Naive thymus-derived CD4-positive, alpha-beta T cell (primary cell): ENCODE measurements at regions of chr10 and their contacts with region 1.

Region 1: GRCh38 chr10:74151056-74151878 is at the start of gene ADK:
- DNase-seq: peak in 8 of 9 donors; percentile 96 to 100 (median 99)
- ATAC-seq: peak; percentile 99
- H3K4me3 ChIP-seq: peak within 1 kb of the TSS; percentile 90
- H3K4me3 Mint-ChIP-seq: no peak within 1 kb of the TSS
- H3K27ac ChIP-seq: peak within 1 kb of the TSS; percentile 84
- H3K27ac Mint-ChIP-seq: peak within 1 kb of the TSS in 5 of 9 donors; percentile 8 to 78 (median 47)
- H3K4me1 ChIP-seq: peaks cover 17 to 23% of the 10 kb centered on the region in 2 donors
- H3K4me1 Mint-ChIP-seq: peaks cover 36 to 56% (median 47%) of the 10 kb centered on the region in 7 donors
- H3K27me3 ChIP-seq: no peaks in the 10 kb centered on the region
- H3K27me3 Mint-ChIP-seq: no peaks in the 10 kb centered on the region
- total RNA-seq, gene ADK: 20.7 to 32.6 (median 25.0) TPM

Region 2: DNA sequence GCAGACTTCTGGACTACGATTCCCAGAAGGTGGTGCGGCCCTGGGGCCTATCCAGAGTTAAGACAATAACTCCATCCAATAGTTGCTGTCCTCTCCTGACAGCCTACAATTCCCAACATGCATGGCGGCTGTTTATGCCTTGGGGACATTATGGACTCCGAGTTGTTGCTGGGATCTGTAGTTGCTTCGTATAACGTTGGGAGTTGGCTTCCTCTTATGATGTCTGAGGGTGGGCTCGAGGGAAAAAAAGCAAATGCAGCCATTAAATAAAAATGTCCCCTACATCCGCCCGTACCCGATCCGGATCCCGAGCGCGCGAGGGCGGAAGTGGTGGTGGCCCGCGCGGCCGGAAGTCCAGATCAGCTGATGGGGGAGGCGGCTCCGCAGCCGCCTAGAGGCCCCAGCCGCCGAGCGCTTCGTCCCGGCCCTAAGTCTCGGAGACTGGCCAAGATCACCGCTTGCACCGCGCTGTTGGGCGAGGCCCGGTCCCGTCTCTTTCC is 366.0 kb before region 1 on chr10 and contains the start of gene ZSWIM8:
- CTCF ChIA-PET with region 1: no interaction called
- POLR2A ChIA-PET with region 1: no interaction called
- intact Hi-C with region 1: loop called (anchors 1 kb)
- DNase-seq: peak; percentile 70 to 93 (median 86)
- ATAC-seq: peak; percentile 91
- H3K4me3 ChIP-seq: peak within 1 kb of the TSS; percentile 91
- H3K4me3 Mint-ChIP-seq: peak within 1 kb of the TSS; percentile 97 to 100 (median 98)
- H3K27ac ChIP-seq: peak within 1 kb of the TSS; percentile 83
- H3K27ac Mint-ChIP-seq: peak within 1 kb of the TSS; percentile 95 to 99 (median 98)
- H3K4me1 ChIP-seq: peaks cover 36 to 43% of the 10 kb centered on the region in 2 donors
- H3K4me1 Mint-ChIP-seq: peaks cover 27 to 66% (median 53%) of the 10 kb centered on the region in 7 donors
- H3K27me3 ChIP-seq: no peaks in the 10 kb centered on the region
- H3K27me3 Mint-ChIP-seq: no peaks in the 10 kb centered on the region
- total RNA-seq, gene ZSWIM8: 70.9 to 102 (median 83.2) TPM

Region 3: DNA sequence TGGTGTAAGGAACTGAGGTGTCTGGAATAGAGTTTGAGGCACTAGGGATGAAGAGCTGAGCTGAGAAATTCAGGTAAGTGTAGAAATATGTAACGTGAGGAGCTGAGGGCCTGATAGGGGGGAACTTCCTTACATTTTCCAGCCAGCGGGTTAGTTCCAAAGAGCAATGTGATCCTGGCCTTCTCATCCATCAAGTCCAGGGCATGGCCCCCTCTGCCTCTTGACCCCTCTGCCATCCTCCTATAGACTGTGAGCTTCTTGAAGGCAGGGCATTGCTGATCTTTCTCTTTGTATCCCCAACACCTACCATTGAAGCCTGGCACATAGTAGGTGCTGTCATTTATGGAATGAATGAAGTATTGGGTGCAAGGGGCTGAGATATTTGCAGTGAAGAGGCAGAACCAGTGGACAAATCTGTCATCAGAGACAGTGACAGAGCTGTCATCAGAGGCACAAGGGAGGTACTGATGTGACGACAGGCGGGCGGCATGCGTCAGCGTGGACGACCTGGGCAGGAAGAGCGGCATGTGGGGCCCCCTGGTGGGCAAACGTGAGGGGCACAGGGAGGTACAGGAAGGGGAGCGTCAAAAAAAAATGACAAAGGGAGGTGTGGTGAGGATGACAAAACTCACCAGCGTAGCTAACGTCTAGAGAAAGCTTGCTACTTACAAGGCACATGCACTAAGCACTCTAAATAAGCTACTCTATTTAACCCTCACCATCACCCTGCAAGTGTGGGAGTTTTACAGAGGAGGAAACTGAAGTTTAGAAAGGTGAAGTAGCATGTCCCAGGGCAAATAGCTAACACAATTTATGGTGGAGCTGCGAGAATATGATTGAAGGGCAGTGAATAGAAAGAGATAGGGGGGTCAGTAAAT is 271.7 kb before region 1 on chr10:
- CTCF ChIA-PET with region 1: interaction called, 3 read pairs
- POLR2A ChIA-PET with region 1: no interaction called
- intact Hi-C with region 1: loop called (anchors 2 kb)
- DNase-seq: peak; percentile 91 to 98 (median 96)
- ATAC-seq: peak; percentile 97
- H3K4me3 ChIP-seq: no peak overlapping the region
- H3K4me3 Mint-ChIP-seq: peak overlapping the region in 5 of 10 donors; percentile 0 to 40 (median 1)
- H3K27ac ChIP-seq: peak overlapping the region; percentile 68
- H3K27ac Mint-ChIP-seq: peak overlapping the region; percentile 30 to 98 (median 89)
- H3K4me1 ChIP-seq: peaks cover 18 to 22% of the 10 kb centered on the region in 2 donors
- H3K4me1 Mint-ChIP-seq: peaks cover 14 to 51% (median 41%) of the 10 kb centered on the region in 7 donors
- H3K27me3 ChIP-seq: no peaks in the 10 kb centered on the region
- H3K27me3 Mint-ChIP-seq: peaks cover 0 to 5% (median 0%) of the 10 kb centered on the region in 5 donors

Region 4: GRCh38 chr10:74165530-74165901 is 14.2 kb after region 1 on chr10:
- CTCF ChIA-PET with region 1: no interaction called
- POLR2A ChIA-PET with region 1: interaction called, 8 read pairs
- intact Hi-C with region 1: loop called in 1 of 2 experiments (anchors 1 kb)
- DNase-seq: no peak
- ATAC-seq: no peak
- H3K4me3 ChIP-seq: no peak overlapping the region
- H3K4me3 Mint-ChIP-seq: no peak overlapping the region
- H3K27ac ChIP-seq: no peak overlapping the region
- H3K27ac Mint-ChIP-seq: no peak overlapping the region
- H3K4me1 ChIP-seq: no peaks in the 10 kb centered on the region
- H3K4me1 Mint-ChIP-seq: peaks cover 15 to 36% (median 22%) of the 10 kb centered on the region in 7 donors
- H3K27me3 ChIP-seq: no peaks in the 10 kb centered on the region
- H3K27me3 Mint-ChIP-seq: no peaks in the 10 kb centered on the region

Region 5: DNA sequence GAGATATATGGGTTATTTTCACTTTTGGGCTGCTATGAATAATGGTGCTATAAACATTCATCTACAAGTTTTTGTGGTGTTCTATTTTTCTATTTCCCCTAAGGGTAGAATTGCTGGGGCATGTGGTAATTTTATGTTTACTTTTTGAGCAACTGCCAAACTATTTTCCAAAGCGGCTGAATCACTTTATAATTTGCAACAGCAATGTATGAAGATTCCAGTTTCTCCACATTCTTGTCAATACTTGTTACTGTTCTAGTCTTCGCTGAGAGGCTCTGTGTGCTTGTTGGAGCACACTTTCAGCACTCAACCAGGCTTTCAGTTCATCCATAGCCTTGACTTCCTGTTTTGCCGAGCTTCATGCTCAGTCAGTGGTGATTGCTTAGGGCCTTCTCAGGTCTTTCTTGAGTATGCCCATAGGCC is 38.7 kb after region 1 on chr10:
- CTCF ChIA-PET with region 1: interaction called, 4 read pairs
- POLR2A ChIA-PET with region 1: interaction called, 11 read pairs
- intact Hi-C with region 1: loop called in 1 of 2 experiments (anchors 1 kb)
- DNase-seq: peak in 6 of 9 donors; percentile 34 to 51 (median 42)
- ATAC-seq: peak; percentile 75
- H3K4me3 ChIP-seq: peak overlapping the region; percentile 15
- H3K4me3 Mint-ChIP-seq: peak overlapping the region; percentile 60 to 83 (median 70)
- H3K27ac ChIP-seq: peak overlapping the region; percentile 62
- H3K27ac Mint-ChIP-seq: peak overlapping the region; percentile 86 to 97 (median 95)
- H3K4me1 ChIP-seq: peaks cover 21 to 27% of the 10 kb centered on the region in 2 donors
- H3K4me1 Mint-ChIP-seq: peaks cover 28 to 76% (median 66%) of the 10 kb centered on the region in 7 donors
- H3K27me3 ChIP-seq: no peaks in the 10 kb centered on the region
- H3K27me3 Mint-ChIP-seq: no peaks in the 10 kb centered on the region

Region 6: GRCh38 chr10:74234569-74234968 is 83.3 kb after region 1 on chr10:
- CTCF ChIA-PET with region 1: no interaction called
- POLR2A ChIA-PET with region 1: interaction called, 4 read pairs
- intact Hi-C with region 1: loop called (anchors 1 to 2 kb)
- DNase-seq: peak in 4 of 9 donors; percentile 12 to 29 (median 20)
- ATAC-seq: no peak
- H3K4me3 ChIP-seq: no peak overlapping the region
- H3K4me3 Mint-ChIP-seq: no peak overlapping the region
- H3K27ac ChIP-seq: no peak overlapping the region
- H3K27ac Mint-ChIP-seq: peak overlapping the region in 1 of 9 donors; percentile 26
- H3K4me1 ChIP-seq: no peaks in the 10 kb centered on the region
- H3K4me1 Mint-ChIP-seq: peaks cover 0 to 11% (median 0%) of the 10 kb centered on the region in 7 donors
- H3K27me3 ChIP-seq: no peaks in the 10 kb centered on the region
- H3K27me3 Mint-ChIP-seq: no peaks in the 10 kb centered on the region

Region 7: GRCh38 chr10:75210282-75211006 is 1059.2 kb after region 1 on chr10 and contains the start of gene VDAC2:
- CTCF ChIA-PET with region 1: no interaction called
- POLR2A ChIA-PET with region 1: interaction called, 16 read pairs
- intact Hi-C with region 1: loop called (anchors 1 to 2 kb)
- DNase-seq: peak; percentile 92 to 100 (median 98)
- ATAC-seq: peak; percentile 92
- H3K4me3 ChIP-seq: peak within 1 kb of the TSS; percentile 81
- H3K4me3 Mint-ChIP-seq: peak within 1 kb of the TSS; percentile 87 to 100 (median 98)
- H3K27ac ChIP-seq: peak within 1 kb of the TSS; percentile 96
- H3K27ac Mint-ChIP-seq: peak within 1 kb of the TSS; percentile 99 to 100 (median 100)
- H3K4me1 ChIP-seq: peaks cover 15 to 21% of the 10 kb centered on the region in 2 donors
- H3K4me1 Mint-ChIP-seq: peaks cover 21 to 44% (median 29%) of the 10 kb centered on the region in 7 donors
- H3K27me3 ChIP-seq: no peaks in the 10 kb centered on the region
- H3K27me3 Mint-ChIP-seq: no peaks in the 10 kb centered on the region
- total RNA-seq, gene VDAC2: 82.8 to 138 (median 121) TPM